Naive thymus-derived CD4-positive, alpha-beta T cell (primary cell): ENCODE measurements at regions of chr5 and their contacts with region 1.

Region 1: DNA sequence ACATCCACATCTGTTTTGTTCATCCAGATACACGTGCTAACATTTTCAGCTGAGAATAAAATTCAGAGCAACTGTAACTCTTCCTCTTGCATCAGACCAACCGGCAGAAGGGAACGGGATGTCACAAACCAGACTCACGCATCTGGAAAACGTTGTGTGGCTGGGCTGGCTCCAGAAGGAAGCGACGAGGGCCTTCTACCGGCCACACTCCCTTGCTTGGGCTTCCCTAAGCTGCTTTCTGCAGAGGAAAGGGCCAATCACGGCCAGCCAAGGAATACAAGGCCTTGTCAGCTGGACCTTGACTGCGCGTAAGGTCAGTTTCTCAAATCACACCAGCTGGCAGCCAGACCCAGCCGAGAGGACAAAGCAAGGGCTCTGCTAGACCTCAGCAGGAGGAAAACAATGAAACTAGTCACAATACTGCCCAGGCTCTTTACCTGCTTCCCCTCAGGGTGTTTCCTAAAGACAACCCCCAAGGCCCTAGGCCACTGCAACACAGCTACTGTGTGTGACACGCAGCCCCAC is 106.1 kb downstream of the THBS4 start:
- DNase-seq: peak in 1 of 9 donors; percentile 18
- ATAC-seq: no peak
- H3K4me3 ChIP-seq: no peak overlapping the region
- H3K4me3 Mint-ChIP-seq: peak overlapping the region in 9 of 10 donors; percentile 27 to 66 (median 47)
- H3K27ac ChIP-seq: peak overlapping the region; percentile 64
- H3K27ac Mint-ChIP-seq: peak overlapping the region; percentile 83 to 95 (median 89)
- H3K4me1 ChIP-seq: peaks cover 37 to 75% of the 10 kb centered on the region in 2 donors
- H3K4me1 Mint-ChIP-seq: peaks cover 58 to 99% (median 75%) of the 10 kb centered on the region in 7 donors
- H3K27me3 ChIP-seq: no peaks in the 10 kb centered on the region
- H3K27me3 Mint-ChIP-seq: no peaks in the 10 kb centered on the region

Region 2: GRCh38 chr5:80125962-80126480 is 15.2 kb before region 1 on chr5:
- CTCF ChIA-PET with region 1: interaction called, 11 read pairs
- POLR2A ChIA-PET with region 1: interaction called, 12 read pairs
- intact Hi-C with region 1: loop called (anchors 1 kb)
- DNase-seq: peak in 3 of 9 donors; percentile 19 to 38 (median 36)
- ATAC-seq: peak; percentile 73
- H3K4me3 ChIP-seq: no peak overlapping the region
- H3K4me3 Mint-ChIP-seq: peak overlapping the region in 8 of 10 donors; percentile 15 to 71 (median 38)
- H3K27ac ChIP-seq: no peak overlapping the region
- H3K27ac Mint-ChIP-seq: peak overlapping the region; percentile 45 to 84 (median 74)
- H3K4me1 ChIP-seq: peaks cover 11 to 25% of the 10 kb centered on the region in 2 donors
- H3K4me1 Mint-ChIP-seq: peaks cover 34 to 80% (median 63%) of the 10 kb centered on the region in 7 donors
- H3K27me3 ChIP-seq: no peaks in the 10 kb centered on the region
- H3K27me3 Mint-ChIP-seq: no peaks in the 10 kb centered on the region

Region 3: GRCh38 chr5:80204808-80205614 is 63.8 kb after region 1 on chr5:
- CTCF ChIA-PET with region 1: interaction called, 12 read pairs
- POLR2A ChIA-PET with region 1: interaction called, 8 read pairs
- intact Hi-C with region 1: loop called in 1 of 2 experiments (anchors 1 kb)
- DNase-seq: peak in 6 of 9 donors; percentile 44 to 59 (median 49)
- ATAC-seq: peak; percentile 88
- H3K4me3 ChIP-seq: no peak overlapping the region
- H3K4me3 Mint-ChIP-seq: peak overlapping the region in 9 of 10 donors; percentile 58 to 82 (median 73)
- H3K27ac ChIP-seq: peak overlapping the region; percentile 54
- H3K27ac Mint-ChIP-seq: peak overlapping the region; percentile 46 to 99 (median 90)
- H3K4me1 ChIP-seq: peaks cover 10 to 74% of the 10 kb centered on the region in 2 donors
- H3K4me1 Mint-ChIP-seq: peaks cover 45 to 99% (median 91%) of the 10 kb centered on the region in 7 donors
- H3K27me3 ChIP-seq: no peaks in the 10 kb centered on the region
- H3K27me3 Mint-ChIP-seq: no peaks in the 10 kb centered on the region

Region 4: GRCh38 chr5:80275347-80275746 is 134.1 kb after region 1 on chr5:
- CTCF ChIA-PET with region 1: interaction called, 10 read pairs
- POLR2A ChIA-PET with region 1: interaction called, 9 read pairs
- intact Hi-C with region 1: loop called (anchors 1 to 2 kb)
- DNase-seq: peak in 6 of 9 donors; percentile 28 to 65 (median 48)
- ATAC-seq: peak; percentile 57
- H3K4me3 ChIP-seq: no peak overlapping the region
- H3K4me3 Mint-ChIP-seq: no peak overlapping the region
- H3K27ac ChIP-seq: no peak overlapping the region
- H3K27ac Mint-ChIP-seq: peak overlapping the region in 7 of 9 donors; percentile 0 to 75 (median 49)
- H3K4me1 ChIP-seq: peaks cover 0 to 19% of the 10 kb centered on the region in 2 donors
- H3K4me1 Mint-ChIP-seq: peaks cover 12 to 36% (median 27%) of the 10 kb centered on the region in 7 donors
- H3K27me3 ChIP-seq: no peaks in the 10 kb centered on the region
- H3K27me3 Mint-ChIP-seq: no peaks in the 10 kb centered on the region